ENCODE measurements at regions of chr3 and their contacts with region 1.

Region 1: DNA sequence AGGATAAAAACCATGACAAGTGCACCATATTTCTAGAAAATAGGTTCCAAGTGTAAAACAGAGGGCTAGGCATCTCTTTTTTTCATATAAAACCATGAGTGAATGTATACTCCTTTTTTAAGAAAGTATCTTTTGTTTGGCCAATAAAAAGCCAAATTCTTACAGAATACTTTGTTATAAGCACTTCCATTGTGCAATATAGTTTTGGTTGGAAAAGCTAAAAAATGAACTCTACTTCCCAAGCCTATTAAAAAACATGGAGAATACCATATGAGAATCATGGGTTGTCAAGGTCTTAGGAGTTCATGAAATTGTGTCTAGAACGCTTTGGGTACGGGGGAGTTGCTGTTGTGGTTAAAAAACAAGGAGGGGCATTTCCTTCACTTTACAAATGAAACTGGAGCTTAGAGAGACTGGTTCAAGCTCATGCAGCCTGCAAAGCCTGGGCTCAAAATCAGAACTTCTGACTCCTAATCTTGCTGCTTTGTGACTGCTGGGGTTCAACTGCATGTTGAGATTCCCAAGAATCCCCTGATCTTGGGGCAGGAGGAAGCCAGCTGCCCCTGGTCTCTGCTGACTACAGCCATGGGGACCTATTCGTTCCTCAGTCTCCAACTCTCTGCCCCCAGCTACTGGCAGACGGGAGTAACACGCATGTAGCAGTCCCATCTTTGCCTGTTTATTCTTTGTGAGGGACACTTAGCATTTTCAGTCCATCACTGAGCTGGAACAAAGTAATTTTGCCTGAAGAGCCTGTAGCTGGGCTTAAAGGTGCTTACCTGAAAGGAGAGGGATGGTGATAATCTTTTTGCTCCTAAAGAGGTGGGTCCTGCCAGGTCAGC is 229.1 kb downstream of the CHST2 start:
- DNase-seq: no peak
- H3K4me3 Mint-ChIP-seq: no peak overlapping the region
- H3K27ac Mint-ChIP-seq: no peak overlapping the region
- H3K4me1 Mint-ChIP-seq: no peaks in the 10 kb centered on the region
- H3K27me3 Mint-ChIP-seq: no peaks in the 10 kb centered on the region
- CTCF ChIP-seq: no peak

Region 2: DNA sequence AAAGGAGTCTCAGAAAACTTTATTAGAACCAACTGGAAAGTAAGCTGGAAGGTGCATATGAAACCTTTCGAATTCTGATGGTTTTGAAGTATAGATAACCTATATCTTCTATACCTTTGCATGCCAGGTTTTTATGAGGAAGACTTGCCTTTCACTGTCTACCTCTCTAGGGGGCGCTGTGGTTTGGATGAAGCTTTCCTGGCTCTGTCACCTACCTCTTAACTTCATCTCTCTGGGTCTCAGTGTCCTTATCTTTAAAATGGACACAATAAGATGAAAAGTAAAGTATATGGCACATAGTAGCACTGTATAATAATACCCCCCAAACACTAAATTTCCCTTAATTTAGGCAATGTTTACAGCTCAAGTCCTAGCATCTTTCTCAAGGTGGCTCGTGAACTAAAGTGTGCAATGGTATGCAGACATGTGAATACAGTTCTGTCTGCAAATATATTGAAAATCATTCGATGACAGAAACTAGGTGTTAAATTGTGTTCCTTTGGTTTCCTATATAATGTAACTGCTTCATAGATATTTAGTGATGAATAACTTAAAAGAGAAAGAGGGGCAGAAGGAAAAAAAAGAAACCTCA is 85.2 kb after region 1 on chr3:
- CTCF ChIA-PET with region 1: no interaction called
- intact Hi-C with region 1: no loop called
- DNase-seq: peak; percentile 45
- H3K4me3 Mint-ChIP-seq: no peak overlapping the region
- H3K27ac Mint-ChIP-seq: no peak overlapping the region
- H3K4me1 Mint-ChIP-seq: peaks cover 23% of the 10 kb centered on the region
- H3K27me3 Mint-ChIP-seq: no peaks in the 10 kb centered on the region
- CTCF ChIP-seq: peak; percentile 45

Region 3: DNA sequence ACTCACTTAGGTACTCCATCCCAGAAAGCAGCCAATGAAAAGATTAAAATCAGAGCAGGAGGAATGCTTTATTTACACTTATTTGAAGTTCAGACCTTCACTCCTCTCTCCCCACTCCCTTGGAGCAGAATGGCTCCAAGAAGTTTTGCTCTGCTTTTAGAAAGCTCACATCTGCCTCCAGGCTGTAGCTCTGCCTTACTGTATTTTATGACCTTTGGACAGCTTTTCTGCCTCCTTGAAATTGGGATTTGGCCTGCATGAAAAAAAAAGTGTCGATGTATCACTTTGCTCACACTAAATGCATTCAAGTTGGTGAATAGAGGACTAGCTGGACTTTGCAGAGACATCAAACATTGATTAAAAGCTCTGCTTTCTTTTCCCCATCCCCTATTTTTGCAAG is 404.3 kb after region 1 on chr3:
- CTCF ChIA-PET with region 1: interaction called, 11 read pairs
- intact Hi-C with region 1: no loop called
- DNase-seq: no peak
- H3K4me3 Mint-ChIP-seq: no peak overlapping the region
- H3K27ac Mint-ChIP-seq: no peak overlapping the region
- H3K4me1 Mint-ChIP-seq: no peaks in the 10 kb centered on the region
- H3K27me3 Mint-ChIP-seq: no peaks in the 10 kb centered on the region
- CTCF ChIP-seq: no peak